ENCODE measurements at regions of chr12 and their contacts with region 1.

Region 1: GRCh38 chr12:122895705-122896636 is at the start of gene VPS37B:
- DNase-seq: peak; percentile 92
- CTCF ChIP-seq: no peak

Region 2: DNA sequence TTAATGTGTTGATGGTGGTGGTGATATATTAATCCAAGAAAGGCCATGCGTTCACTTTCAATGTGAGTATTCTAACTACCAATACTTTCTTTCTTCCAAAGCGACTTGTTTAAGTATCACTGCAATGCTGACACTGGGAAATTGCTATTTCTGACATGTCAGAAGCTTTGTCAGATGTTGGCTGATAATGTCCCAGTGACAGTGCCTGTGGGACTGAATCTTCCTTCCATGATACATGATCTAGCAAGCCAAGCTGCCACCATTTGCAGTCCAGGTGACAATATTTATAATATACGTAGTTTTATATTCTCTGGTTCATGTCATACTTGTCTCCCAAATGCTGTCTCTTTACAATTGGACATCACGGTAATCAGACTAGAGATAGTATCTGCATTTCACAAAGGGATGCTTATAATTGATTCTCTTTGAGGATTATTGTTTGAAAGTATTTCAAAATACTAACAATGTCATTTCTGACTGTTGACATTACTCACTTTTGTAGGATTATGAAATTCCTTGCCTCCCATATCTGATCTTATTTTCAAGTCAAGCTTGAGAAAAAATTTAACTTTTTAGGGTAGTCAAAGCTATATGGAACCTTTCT is 311.7 kb before region 1 on chr12:
- CTCF ChIA-PET with region 1: no interaction called
- POLR2A ChIA-PET with region 1: interaction called, 12 read pairs
- DNase-seq: no peak
- CTCF ChIP-seq: no peak

Region 3: DNA sequence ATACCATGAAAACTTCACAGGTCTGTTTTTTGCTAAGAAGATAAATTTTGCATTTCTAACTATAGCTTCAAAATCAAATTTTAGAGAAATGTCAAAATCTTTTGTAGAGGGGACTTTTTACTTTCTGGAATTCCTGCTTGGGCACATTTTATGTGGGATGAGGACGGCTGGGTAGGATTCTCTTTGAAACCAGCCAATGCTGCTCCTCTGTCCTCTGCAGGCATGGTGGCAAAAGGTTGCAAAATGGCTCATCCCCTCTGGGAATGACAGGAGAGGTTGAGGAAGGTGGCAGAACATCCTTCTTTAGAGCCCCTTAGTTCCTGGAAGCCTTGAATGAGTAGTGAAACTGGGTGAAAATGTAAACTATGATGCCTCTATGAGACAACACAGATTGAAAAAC is 128.3 kb before region 1 on chr12:
- CTCF ChIA-PET with region 1: no interaction called
- POLR2A ChIA-PET with region 1: no interaction called
- DNase-seq: no peak
- CTCF ChIP-seq: no peak

Region 4: DNA sequence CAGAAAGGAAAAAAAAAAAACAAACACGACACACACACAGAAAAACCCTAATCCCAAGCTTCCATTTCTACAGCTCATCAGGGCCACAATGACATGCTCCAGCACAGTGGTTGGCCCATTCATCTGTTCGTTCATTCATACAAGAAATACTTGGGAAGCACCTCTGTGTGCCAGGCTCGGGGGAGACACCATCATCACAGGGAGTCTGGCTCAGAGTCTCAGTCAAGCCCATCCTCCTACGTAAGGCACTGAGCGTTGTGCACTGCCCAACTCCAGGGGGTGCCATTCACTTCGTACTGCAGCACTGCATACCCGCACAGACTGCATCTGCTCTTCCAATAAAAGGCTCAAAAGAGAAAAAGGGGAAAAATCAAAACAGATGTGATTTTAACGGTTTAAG is 15.3 kb before region 1 on chr12:
- CTCF ChIA-PET with region 1: interaction called, 23 read pairs
- POLR2A ChIA-PET with region 1: no interaction called
- DNase-seq: no peak
- CTCF ChIP-seq: peak; percentile 40